Aorta (tissue), 5 donors: ENCODE measurements at regions of chr12 and their contacts with region 1.

Region 1: GRCh38 chr12:2783936-2784600 is 10.7 kb upstream of the FKBP4 start:
- DNase-seq: peak; percentile 76 to 88
- ATAC-seq: peak; percentile 92
- H3K4me3 ChIP-seq: no peak overlapping the region
- H3K27ac ChIP-seq: no peak overlapping the region
- H3K4me1 ChIP-seq: no peaks in the 10 kb centered on the region
- H3K27me3 ChIP-seq: no peaks in the 10 kb centered on the region

Region 2: GRCh38 chr12:2682296-2683251 is 101.5 kb before region 1 on chr12:
- intact Hi-C with region 1: loop called in 1 of 2 experiments (anchors 10 kb)
- DNase-seq: peak in 1 of 2 donors; percentile 69
- ATAC-seq: no peak
- H3K4me3 ChIP-seq: no peak overlapping the region
- H3K27ac ChIP-seq: no peak overlapping the region
- H3K4me1 ChIP-seq: no peaks in the 10 kb centered on the region
- H3K27me3 ChIP-seq: no peaks in the 10 kb centered on the region

Region 3: GRCh38 chr12:2739817-2740641 is 44.0 kb before region 1 on chr12:
- intact Hi-C with region 1: loop called (anchors 2 to 5 kb)
- DNase-seq: no peak
- ATAC-seq: no peak
- H3K4me3 ChIP-seq: no peak overlapping the region
- H3K27ac ChIP-seq: no peak overlapping the region
- H3K4me1 ChIP-seq: no peaks in the 10 kb centered on the region
- H3K27me3 ChIP-seq: no peaks in the 10 kb centered on the region

Region 4: DNA sequence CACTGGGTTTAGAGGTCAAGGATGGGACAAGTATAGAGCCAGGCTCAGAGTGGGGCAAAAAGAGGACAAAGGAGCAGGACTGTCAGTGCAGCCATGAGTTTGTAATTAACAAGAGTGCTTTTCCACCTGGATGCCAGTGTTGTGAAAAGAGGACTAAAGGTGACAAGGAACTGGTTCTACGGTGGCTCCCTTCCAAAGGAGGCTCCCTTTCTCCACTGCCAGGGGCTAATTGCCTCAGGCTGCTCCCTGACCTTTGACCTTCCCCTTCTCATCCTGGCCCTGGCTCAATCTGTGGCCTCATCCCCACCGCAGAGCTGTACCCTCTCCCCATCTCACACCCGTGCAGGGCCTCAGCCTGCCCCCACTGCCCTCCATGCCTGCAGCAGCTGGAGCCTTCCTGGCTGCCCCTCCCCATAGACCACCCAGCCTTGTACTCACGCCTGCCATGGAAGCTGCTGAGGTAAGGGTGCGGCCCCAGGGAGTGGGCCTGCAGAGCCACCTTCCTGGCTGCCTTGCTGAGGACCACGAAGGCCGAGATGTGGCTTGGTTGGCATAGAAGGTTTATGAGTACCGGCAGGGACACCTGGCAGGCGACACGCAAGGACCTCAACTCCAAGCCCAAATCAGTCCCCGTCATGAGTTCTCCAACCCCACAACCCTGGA is 14.1 kb before region 1 on chr12:
- intact Hi-C with region 1: no loop called
- DNase-seq: no peak
- ATAC-seq: no peak
- H3K4me3 ChIP-seq: no peak overlapping the region
- H3K27ac ChIP-seq: no peak overlapping the region
- H3K4me1 ChIP-seq: no peaks in the 10 kb centered on the region
- H3K27me3 ChIP-seq: no peaks in the 10 kb centered on the region

Region 5: GRCh38 chr12:3261782-3262359 is 477.8 kb after region 1 on chr12:
- intact Hi-C with region 1: no loop called
- DNase-seq: no peak
- ATAC-seq: peak; percentile 31
- H3K4me3 ChIP-seq: no peak overlapping the region
- H3K27ac ChIP-seq: peak overlapping the region in 1 of 2 donors; percentile 13
- H3K4me1 ChIP-seq: peaks cover 0 to 2% of the 10 kb centered on the region in 2 donors
- H3K27me3 ChIP-seq: no peaks in the 10 kb centered on the region